Thyroid gland (tissue), 4 donors: ENCODE measurements at regions of chr2 and their contacts with region 1.

Region 1: DNA sequence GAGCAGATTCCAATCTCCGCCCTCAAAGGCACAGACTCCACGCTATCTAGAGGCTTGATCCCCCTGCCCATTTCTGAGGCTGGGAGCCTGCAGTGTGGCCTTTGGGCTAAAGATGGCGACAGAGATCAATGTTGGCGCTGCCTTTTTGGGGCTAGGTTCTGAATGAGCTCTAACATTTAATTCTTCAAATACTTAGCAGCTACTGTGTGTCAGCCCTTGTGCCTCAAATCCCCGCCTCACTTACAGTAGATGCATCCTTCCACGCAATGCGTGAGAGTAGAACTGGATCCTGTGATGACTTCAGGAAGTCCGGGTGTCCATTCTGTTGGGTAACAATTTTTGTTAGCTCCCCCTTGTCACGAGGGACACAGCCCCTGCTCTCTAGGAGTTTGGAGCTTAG is 12.4 kb downstream of the IL1F10 start:
- DNase-seq: peak; percentile 41 to 54
- H3K4me3 ChIP-seq: no peak overlapping the region
- H3K27ac ChIP-seq: peak overlapping the region in 1 of 3 donors; percentile 73
- H3K4me1 ChIP-seq: peaks cover 23 to 30% of the 10 kb centered on the region in 2 donors
- H3K27me3 ChIP-seq: no peaks in the 10 kb centered on the region
- CTCF ChIP-seq: peak; percentile 28 to 77 (median 66)
- POLR2A ChIP-seq: no peak

Region 2: DNA sequence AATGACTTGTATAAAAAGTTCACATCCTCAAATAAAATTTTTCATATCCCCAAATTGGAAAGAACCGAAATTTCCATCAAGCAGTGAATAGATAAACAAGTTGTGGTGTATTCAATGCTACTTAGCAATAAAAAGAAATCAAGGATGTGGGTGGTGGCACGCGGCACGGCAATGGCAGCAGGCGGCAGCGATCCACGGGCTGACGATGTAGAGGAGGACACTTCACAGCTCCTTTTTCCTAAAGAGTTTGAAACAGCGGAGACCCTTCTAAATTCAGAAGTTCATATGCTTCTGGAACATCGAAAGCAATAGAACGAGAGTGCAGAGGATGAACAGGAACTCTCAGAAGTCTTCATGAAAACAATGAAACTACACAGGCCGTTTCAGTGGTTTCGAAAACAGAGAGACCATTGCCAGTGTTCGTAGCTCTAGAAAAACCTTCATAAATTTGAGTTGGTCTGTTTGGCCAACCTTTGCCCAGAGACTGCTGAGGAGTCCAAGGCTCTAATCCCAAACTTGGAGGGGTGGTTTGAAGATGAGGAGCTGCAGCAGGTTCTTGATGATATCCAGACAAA is 84.7 kb before region 1 on chr2:
- intact Hi-C with region 1: no loop called
- DNase-seq: no peak
- H3K4me3 ChIP-seq: no peak overlapping the region
- H3K27ac ChIP-seq: no peak overlapping the region
- H3K4me1 ChIP-seq: no peaks in the 10 kb centered on the region
- H3K27me3 ChIP-seq: no peaks in the 10 kb centered on the region
- CTCF ChIP-seq: no peak
- POLR2A ChIP-seq: no peak

Region 3: DNA sequence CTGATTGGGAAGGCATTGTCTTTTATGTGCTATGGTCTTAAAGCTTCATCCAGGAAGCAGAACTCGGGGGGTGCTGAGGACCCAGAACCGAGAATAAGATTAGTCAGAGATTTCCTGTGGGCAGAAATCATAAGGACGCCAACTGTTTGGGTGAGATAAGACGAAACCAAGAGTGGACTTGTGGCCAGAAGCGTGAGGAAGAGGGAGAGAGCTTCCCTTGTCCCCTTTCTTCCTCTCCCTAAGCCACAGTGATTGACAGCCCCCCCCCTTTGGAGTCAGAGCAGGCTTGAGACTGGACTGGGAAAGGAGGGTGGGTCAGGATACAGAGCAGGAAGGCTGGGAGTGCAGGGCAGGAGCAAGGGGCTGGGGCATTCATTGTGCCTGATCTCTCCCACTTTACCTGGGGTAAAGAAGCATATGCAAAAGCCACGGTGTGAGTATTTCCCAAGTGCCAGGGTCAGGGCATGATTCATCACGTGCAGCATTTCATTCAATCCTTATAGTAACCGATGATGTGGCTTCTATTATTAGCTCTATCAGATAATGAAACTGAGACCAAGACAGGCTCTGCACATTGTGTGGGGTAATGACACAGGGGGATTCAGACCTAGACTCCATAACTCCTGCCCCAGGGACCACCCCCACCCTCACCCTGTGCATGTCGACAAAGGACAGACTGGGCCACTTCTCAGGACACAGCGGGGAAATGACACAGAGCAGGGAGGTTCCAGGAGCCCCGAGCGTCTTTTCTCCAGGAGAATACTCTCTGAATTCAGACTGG is 44.2 kb after region 1 on chr2:
- intact Hi-C with region 1: loop called (anchors 5 kb)
- DNase-seq: no peak
- H3K4me3 ChIP-seq: no peak overlapping the region
- H3K27ac ChIP-seq: no peak overlapping the region
- H3K4me1 ChIP-seq: no peaks in the 10 kb centered on the region
- H3K27me3 ChIP-seq: no peaks in the 10 kb centered on the region
- CTCF ChIP-seq: no peak
- POLR2A ChIP-seq: no peak

Region 4: GRCh38 chr2:113198790-113199612 is 118.9 kb after region 1 on chr2:
- intact Hi-C with region 1: loop called (anchors 10 kb)
- DNase-seq: peak; percentile 90
- H3K4me3 ChIP-seq: peak overlapping the region; percentile 24 to 80 (median 62)
- H3K27ac ChIP-seq: peak overlapping the region; percentile 56 to 94 (median 84)
- H3K4me1 ChIP-seq: peaks cover 18 to 42% of the 10 kb centered on the region in 2 donors
- H3K27me3 ChIP-seq: no peaks in the 10 kb centered on the region
- CTCF ChIP-seq: peak; percentile 61 to 98 (median 95)
- POLR2A ChIP-seq: peak in 1 of 2 donors; percentile 85